ENCODE measurements at regions of chr1 and their contacts with region 1.

Region 1: DNA sequence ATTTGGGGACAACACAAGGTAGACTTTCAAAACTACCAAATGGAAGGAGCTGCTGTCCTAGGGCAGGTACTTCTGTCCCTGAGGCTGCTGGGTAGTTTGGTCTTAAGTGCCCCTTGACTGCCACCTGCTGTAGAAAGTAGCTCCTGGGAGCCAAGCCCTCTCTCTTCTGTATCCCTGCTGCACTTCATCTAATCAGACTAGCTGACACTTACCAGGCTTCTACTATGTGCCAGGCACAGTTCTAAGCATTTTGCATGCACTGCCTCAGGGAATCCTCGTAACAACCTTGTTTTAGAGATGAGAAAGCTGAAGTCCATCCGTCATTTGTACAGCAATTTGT is 15.9 kb upstream of the SRSF4 start:
- DNase-seq: no peak
- H3K4me3 ChIP-seq: no peak overlapping the region
- H3K27ac ChIP-seq: no peak overlapping the region
- H3K4me1 ChIP-seq: peaks cover 0 to 5% (median 1%) of the 10 kb centered on the region in 4 experiments; a peak in 2 of 7 replicates
- H3K27me3 ChIP-seq: no peaks in the 10 kb centered on the region
- CTCF ChIP-seq: peak; percentile 49 to 77 (median 69)
- EP300 ChIP-seq: no peak
- POLR2A ChIP-seq: no peak
- RAD21 ChIP-seq: peak; percentile 72 to 79

Region 2: GRCh38 chr1:29124366-29125236 is 73.0 kb before region 1 on chr1:
- CTCF ChIA-PET with region 1: interaction called, 20 read pairs
- POLR2A ChIA-PET with region 1: interaction called, 9 read pairs
- DNase-seq: peak; percentile 66 to 93
- H3K4me3 ChIP-seq: peak overlapping the region; percentile 51 to 91 (median 61)
- H3K27ac ChIP-seq: peak overlapping the region; percentile 48; the same call in 1 of the 2 replicates
- H3K4me1 ChIP-seq: peaks cover 0 to 19% (median 9%) of the 10 kb centered on the region in 4 experiments; a peak in 6 of 7 replicates
- H3K27me3 ChIP-seq: peaks cover 0 to 42% (median 25%) of the 10 kb centered on the region in 4 experiments; a peak in 6 of 7 replicates
- CTCF ChIP-seq: peak in 2 of 3 experiments; percentile 42 to 77; a peak in 3 of 4 replicates
- EP300 ChIP-seq: peak; percentile 36 to 82; a peak in 2 of 3 replicates
- POLR2A ChIP-seq: no peak; a peak in 1 of 3 replicates
- RAD21 ChIP-seq: peak in 1 of 2 experiments; percentile 23; a peak in 2 of 4 replicates

Region 3: GRCh38 chr1:29156543-29157268 is 40.8 kb before region 1 on chr1:
- CTCF ChIA-PET with region 1: interaction called, 12 read pairs
- POLR2A ChIA-PET with region 1: no interaction called
- DNase-seq: no peak
- H3K4me3 ChIP-seq: no peak overlapping the region
- H3K27ac ChIP-seq: no peak overlapping the region
- H3K4me1 ChIP-seq: no peaks in the 10 kb centered on the region; a peak in 3 of 7 replicates
- H3K27me3 ChIP-seq: no peaks in the 10 kb centered on the region
- CTCF ChIP-seq: no peak
- EP300 ChIP-seq: no peak
- POLR2A ChIP-seq: no peak
- RAD21 ChIP-seq: no peak

Region 4: GRCh38 chr1:29171089-29171488 is 26.5 kb before region 1 on chr1:
- CTCF ChIA-PET with region 1: interaction called, 13 read pairs
- POLR2A ChIA-PET with region 1: interaction called, 3 read pairs
- DNase-seq: no peak
- H3K4me3 ChIP-seq: no peak overlapping the region
- H3K27ac ChIP-seq: no peak overlapping the region
- H3K4me1 ChIP-seq: peaks cover 3 to 8% (median 6%) of the 10 kb centered on the region in 4 experiments; a peak in 4 of 7 replicates
- H3K27me3 ChIP-seq: no peaks in the 10 kb centered on the region
- CTCF ChIP-seq: no peak
- EP300 ChIP-seq: no peak
- POLR2A ChIP-seq: no peak
- RAD21 ChIP-seq: no peak

Region 5: DNA sequence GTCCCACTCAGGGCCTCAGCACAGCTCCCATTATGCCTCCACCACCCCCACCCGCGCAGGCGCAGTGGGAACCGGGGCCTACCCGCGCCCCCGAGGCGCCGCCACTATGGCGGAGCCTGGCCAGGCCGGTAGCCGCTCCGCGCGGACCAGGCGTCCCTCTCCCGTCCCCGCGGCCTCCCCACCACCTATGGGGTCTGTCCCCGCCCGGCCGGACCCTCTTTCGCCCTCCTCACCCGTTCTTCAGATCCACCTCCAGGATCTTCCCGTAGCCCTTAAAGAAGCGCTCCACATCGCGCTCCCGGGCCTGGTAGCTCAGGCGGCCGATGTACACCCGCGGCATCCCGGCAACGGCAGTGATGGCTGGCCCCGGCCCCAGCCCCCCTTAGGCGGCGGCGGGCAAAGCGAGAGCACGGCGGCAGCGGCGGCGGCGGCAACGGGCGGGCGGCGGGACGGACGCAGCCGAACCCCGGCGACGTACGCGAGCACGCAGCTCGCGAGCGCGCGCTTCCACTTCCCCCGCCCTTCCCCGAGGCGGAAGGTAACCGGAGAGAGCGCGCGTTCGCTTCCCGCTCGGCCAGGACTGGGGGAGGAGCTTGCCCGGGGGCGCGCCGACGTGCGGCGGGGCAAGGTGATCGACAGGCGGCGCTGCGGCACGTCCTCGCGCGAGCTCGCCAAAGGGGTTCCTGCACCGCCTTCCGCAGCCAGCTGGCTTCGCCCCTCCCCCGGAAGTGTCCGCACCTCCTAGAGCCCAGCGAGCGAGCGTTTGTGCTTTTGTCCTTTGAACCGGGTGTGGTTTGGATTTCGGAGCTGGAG is 15.9 kb before region 1 on chr1 and contains the start of gene SRSF4:
- CTCF ChIA-PET with region 1: interaction called, 29 read pairs
- POLR2A ChIA-PET with region 1: interaction called, 37 read pairs
- DNase-seq: peak; percentile 99
- H3K4me3 ChIP-seq: peak within 1 kb of the TSS; percentile 79 to 95 (median 89)
- H3K27ac ChIP-seq: peak within 1 kb of the TSS; percentile 97
- H3K4me1 ChIP-seq: peaks cover 2 to 13% (median 6%) of the 10 kb centered on the region in 4 experiments; a peak in 5 of 7 replicates
- H3K27me3 ChIP-seq: no peaks in the 10 kb centered on the region
- CTCF ChIP-seq: peak; percentile 61 to 85 (median 79)
- EP300 ChIP-seq: peak in 1 of 2 experiments; percentile 65; a peak in 1 of 3 replicates
- POLR2A ChIP-seq: peak in 1 of 2 experiments; percentile 77; a peak in 2 of 3 replicates
- RAD21 ChIP-seq: peak; percentile 43 to 55
- total RNA-seq, gene SRSF4: 83.5 and 86.5 TPM in 2 replicates

Region 6: DNA sequence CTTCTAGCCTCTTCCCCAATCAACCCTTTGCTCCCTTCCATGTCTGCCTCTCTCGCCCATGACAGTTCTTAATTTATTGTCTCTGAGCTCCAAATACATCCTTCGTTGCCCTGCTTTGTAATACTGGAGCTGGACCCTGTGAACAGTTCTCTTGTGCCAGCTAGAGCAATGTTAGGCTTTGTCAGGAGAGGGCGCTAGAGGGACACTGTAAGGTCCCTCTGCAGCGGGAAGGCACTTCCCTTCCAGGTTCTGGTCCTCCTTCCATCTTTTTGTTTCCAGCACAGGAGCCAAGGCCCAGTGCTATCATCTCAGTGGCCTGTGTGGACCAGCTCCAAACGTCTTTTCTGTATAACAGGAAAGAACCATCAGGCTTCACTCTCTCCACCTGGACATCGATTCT is 134.6 kb after region 1 on chr1:
- CTCF ChIA-PET with region 1: no interaction called
- POLR2A ChIA-PET with region 1: no interaction called
- DNase-seq: peak; percentile 49 to 86
- H3K4me3 ChIP-seq: no peak overlapping the region
- H3K27ac ChIP-seq: no peak overlapping the region
- H3K4me1 ChIP-seq: 0 out of 7 replicates have a peak, but pooled peaks cover 0 to 2% (median 0%) of the 10 kb centered on the region in 4 experiments
- H3K27me3 ChIP-seq: no peaks in the 10 kb centered on the region
- CTCF ChIP-seq: peak; percentile 74 to 95 (median 86)
- EP300 ChIP-seq: no peak
- POLR2A ChIP-seq: no peak
- RAD21 ChIP-seq: peak; percentile 89 to 92

Measured in H1 (cell line).